Naive thymus-derived CD4-positive, alpha-beta T cell (primary cell): ENCODE measurements at regions of chr19 and their contacts with region 1.

Region 1: DNA sequence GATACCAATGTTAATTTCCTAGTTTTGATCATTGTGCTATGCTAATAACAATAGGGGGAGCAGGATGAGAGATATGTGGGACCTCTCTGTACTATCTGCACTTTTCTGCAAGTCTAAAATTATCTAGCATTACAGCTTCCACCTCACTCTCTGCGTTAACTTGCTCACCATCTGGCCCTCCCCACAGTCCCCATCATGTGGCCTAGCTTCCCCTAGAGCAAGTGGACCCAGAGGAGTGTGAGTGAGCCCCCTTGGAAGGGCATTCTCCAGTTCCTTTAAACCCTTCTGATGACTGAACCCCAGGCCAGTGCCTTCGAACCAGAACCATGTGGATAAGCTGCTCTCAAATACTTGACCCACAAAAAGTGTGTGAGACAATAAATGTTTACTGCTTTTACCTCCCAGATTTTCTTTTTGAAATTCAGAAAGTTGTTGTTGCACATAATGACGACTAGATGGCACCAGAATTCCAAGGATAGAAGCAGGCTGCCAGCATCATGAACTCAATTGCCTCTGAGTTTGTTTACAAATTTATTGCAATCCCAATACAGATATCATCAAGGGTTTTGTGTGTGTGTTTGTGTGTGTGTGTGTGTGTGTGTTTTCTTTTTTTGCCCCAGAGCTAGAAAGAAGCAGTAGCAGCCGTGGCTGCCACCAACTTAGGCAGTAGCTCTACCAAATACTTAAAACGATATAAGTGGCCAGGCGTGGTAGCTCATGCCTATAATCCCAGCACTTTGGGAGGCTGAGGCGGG is 49.0 kb upstream of the ZNF780A start:
- DNase-seq: peak in 6 of 9 donors; percentile 38 to 63 (median 55)
- ATAC-seq: peak; percentile 43
- H3K4me3 ChIP-seq: no peak overlapping the region
- H3K4me3 Mint-ChIP-seq: peak overlapping the region in 1 of 10 donors; percentile 16
- H3K27ac ChIP-seq: no peak overlapping the region
- H3K27ac Mint-ChIP-seq: peak overlapping the region in 5 of 9 donors; percentile 0 to 59 (median 31)
- H3K4me1 ChIP-seq: peaks cover 16 to 18% of the 10 kb centered on the region in 2 donors
- H3K4me1 Mint-ChIP-seq: peaks cover 0 to 29% (median 18%) of the 10 kb centered on the region in 7 donors
- H3K27me3 ChIP-seq: no peaks in the 10 kb centered on the region
- H3K27me3 Mint-ChIP-seq: peaks cover 0 to 21% (median 11%) of the 10 kb centered on the region in 5 donors

Region 2: DNA sequence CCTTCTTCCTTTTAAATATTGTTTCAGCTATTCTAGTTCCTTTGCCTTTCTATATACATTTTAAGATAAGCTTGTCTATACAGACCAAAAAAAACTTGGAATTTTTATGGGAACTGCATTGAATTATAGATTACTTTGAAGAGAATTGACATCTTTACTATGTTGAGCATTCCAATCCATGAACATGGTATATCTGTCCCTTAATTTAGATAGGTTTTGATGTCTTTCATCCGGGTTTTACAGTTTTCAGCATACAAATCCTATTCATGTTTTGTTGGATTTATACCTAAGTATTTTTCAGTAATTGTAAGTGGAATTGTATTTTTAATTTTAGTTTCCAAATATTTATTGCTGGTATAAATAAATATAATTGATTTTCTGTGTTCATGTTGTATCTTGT is 855.7 kb before region 1 on chr19:
- CTCF ChIA-PET with region 1: no interaction called
- POLR2A ChIA-PET with region 1: no interaction called
- intact Hi-C with region 1: no loop called
- DNase-seq: no peak
- ATAC-seq: no peak
- H3K4me3 ChIP-seq: no peak overlapping the region
- H3K4me3 Mint-ChIP-seq: no peak overlapping the region
- H3K27ac ChIP-seq: no peak overlapping the region
- H3K27ac Mint-ChIP-seq: no peak overlapping the region
- H3K4me1 ChIP-seq: no peaks in the 10 kb centered on the region
- H3K4me1 Mint-ChIP-seq: peaks cover 0 to 2% (median 0%) of the 10 kb centered on the region in 7 donors
- H3K27me3 ChIP-seq: no peaks in the 10 kb centered on the region
- H3K27me3 Mint-ChIP-seq: peaks cover 0 to 35% (median 5%) of the 10 kb centered on the region in 5 donors

Region 3: GRCh38 chr19:39792999-39793546 is 346.6 kb before region 1 on chr19:
- CTCF ChIA-PET with region 1: no interaction called
- POLR2A ChIA-PET with region 1: no interaction called
- intact Hi-C with region 1: loop called in 1 of 2 experiments (anchors 5 kb)
- DNase-seq: peak; percentile 56 to 80 (median 72)
- ATAC-seq: peak; percentile 94
- H3K4me3 ChIP-seq: peak overlapping the region; percentile 74
- H3K4me3 Mint-ChIP-seq: peak overlapping the region; percentile 58 to 84 (median 80)
- H3K27ac ChIP-seq: no peak overlapping the region
- H3K27ac Mint-ChIP-seq: no peak overlapping the region
- H3K4me1 ChIP-seq: no peaks in the 10 kb centered on the region
- H3K4me1 Mint-ChIP-seq: peaks cover 0 to 7% (median 0%) of the 10 kb centered on the region in 7 donors
- H3K27me3 ChIP-seq: no peaks in the 10 kb centered on the region
- H3K27me3 Mint-ChIP-seq: peaks cover 0 to 18% (median 2%) of the 10 kb centered on the region in 5 donors

Region 4: DNA sequence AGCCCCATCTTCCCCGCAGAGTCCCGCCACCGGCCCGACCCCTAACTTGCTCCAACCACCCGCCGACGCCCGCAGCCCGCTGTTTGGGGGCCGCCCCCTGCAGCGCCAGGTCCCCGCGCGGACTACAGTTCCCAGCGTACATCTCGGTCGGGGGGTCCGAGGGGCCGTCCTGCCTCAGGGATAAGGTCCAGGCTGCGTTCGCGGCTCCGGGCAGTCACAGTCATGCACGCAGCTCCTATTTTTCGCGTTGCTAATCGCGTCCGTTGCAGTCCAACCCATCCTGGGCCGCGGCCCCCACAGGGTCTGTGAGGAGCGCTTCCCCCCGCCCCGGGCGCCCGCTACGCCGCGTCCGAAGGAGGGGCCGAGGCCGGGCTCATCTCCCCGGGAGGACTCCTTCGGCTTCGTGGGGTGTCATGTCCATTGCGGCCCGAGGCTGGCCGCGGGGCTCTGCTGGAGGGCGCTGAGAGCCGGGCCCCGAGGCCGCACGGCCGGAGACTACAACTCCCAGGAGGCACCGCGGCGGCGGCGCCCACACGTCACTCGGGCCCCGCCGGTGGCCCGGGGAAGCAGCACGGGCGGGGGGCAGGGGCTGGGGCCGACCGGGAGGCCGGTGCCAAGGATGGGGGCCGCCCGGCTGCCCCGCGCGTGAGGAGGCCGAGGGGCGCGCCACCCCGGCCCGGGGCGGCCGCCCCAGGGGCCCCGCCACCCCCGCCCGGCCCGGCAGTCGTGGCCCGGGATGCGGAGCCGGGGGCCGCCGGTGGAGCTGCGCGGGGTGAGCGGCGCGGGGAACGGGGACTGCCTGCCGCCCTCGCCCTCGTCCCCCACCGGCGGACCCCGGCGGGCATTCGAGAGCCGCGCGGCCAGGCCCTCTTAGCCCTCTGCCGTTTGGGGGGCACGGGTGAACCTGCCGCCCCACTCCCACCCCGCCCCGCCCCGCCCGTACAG is 51.5 kb after region 1 on chr19 and contains the start of gene MAP3K10:
- CTCF ChIA-PET with region 1: no interaction called
- POLR2A ChIA-PET with region 1: no interaction called
- intact Hi-C with region 1: loop called in 1 of 2 experiments (anchors 2 kb)
- DNase-seq: peak; percentile 50 to 84 (median 67)
- ATAC-seq: peak; percentile 95
- H3K4me3 ChIP-seq: peak within 1 kb of the TSS; percentile 97
- H3K4me3 Mint-ChIP-seq: peak within 1 kb of the TSS; percentile 76 to 92 (median 86)
- H3K27ac ChIP-seq: peak within 1 kb of the TSS; percentile 86
- H3K27ac Mint-ChIP-seq: peak within 1 kb of the TSS; percentile 53 to 94 (median 87)
- H3K4me1 ChIP-seq: peaks cover 5 to 10% of the 10 kb centered on the region in 2 donors
- H3K4me1 Mint-ChIP-seq: peaks cover 14 to 39% (median 30%) of the 10 kb centered on the region in 7 donors
- H3K27me3 ChIP-seq: no peaks in the 10 kb centered on the region
- H3K27me3 Mint-ChIP-seq: no peaks in the 10 kb centered on the region
- total RNA-seq, gene MAP3K10: 22.3 to 31.5 (median 27.0) TPM

Region 5: DNA sequence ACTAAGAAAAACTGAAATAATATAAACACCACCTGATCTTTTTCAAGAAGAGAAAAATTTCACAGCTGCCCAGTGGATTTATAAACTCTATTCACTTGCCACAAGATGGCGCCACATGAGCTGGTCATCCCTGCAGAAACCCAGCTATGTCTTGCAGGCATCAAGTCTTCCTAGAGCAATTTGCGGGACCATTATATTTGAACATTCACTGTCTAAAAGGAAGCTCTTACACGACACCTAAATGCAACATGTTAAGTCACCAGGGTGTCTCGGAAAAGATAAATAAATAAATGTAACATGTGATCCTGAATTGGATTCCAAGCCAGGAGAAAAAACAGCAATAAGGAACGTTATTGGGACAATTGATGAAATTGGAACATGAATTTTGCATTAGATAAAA is 165.7 kb after region 1 on chr19:
- CTCF ChIA-PET with region 1: no interaction called
- POLR2A ChIA-PET with region 1: no interaction called
- intact Hi-C with region 1: loop called in 1 of 2 experiments (anchors 1 kb)
- DNase-seq: peak; percentile 39 to 75 (median 63)
- ATAC-seq: peak; percentile 80
- H3K4me3 ChIP-seq: no peak overlapping the region
- H3K4me3 Mint-ChIP-seq: no peak overlapping the region
- H3K27ac ChIP-seq: no peak overlapping the region
- H3K27ac Mint-ChIP-seq: no peak overlapping the region
- H3K4me1 ChIP-seq: no peaks in the 10 kb centered on the region
- H3K4me1 Mint-ChIP-seq: peaks cover 0 to 5% (median 4%) of the 10 kb centered on the region in 7 donors
- H3K27me3 ChIP-seq: no peaks in the 10 kb centered on the region
- H3K27me3 Mint-ChIP-seq: no peaks in the 10 kb centered on the region

Region 6: DNA sequence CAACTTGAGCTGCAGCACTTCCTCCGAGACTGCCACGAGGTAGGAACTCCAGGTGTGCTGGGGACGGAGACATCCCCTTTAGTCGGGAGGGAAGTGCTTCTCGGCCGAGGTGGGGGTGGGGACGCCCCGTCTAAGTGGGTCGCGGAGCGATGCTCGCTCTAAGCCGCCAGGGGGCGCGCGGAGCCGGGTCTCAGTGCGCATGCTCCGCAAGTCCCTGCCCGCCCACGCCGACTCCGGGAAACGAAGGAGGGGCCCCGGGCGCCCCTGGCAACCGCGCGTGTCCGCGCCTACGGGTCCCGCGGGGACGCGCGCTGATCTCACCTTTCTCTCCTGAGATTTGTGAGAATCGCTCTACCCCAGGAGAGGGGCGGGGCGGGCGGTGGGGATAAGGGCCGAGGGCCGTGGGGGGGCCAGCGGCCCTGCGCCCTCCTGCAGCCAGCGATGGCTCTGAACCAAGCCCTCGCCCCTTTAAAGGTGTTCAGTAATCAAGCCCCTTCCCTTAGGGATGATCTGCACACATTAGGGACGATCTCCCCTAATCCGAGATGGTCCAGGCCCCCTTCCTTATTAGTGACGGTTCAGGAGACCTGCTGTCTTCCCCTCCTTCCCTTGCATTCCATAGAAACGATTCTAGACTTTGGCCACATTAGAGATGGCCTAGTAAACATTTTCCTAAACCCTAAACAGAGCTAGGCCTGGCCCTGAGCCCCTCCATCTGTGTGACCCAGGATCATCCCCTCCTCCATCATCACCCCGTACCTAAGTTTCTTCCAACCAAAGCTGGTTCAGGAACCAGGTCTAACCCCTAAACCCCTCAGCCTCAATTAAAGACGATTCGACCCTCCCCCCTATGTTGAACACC is 389.6 kb after region 1 on chr19:
- CTCF ChIA-PET with region 1: no interaction called
- POLR2A ChIA-PET with region 1: no interaction called
- intact Hi-C with region 1: loop called in 1 of 2 experiments (anchors 5 kb)
- DNase-seq: peak; percentile 84 to 97 (median 89)
- ATAC-seq: peak; percentile 97
- H3K4me3 ChIP-seq: peak overlapping the region; percentile 72
- H3K4me3 Mint-ChIP-seq: peak overlapping the region; percentile 66 to 87 (median 81)
- H3K27ac ChIP-seq: no peak overlapping the region
- H3K27ac Mint-ChIP-seq: peak overlapping the region in 6 of 9 donors; percentile 36 to 90 (median 60)
- H3K4me1 ChIP-seq: peaks cover 9 to 16% of the 10 kb centered on the region in 2 donors
- H3K4me1 Mint-ChIP-seq: peaks cover 5 to 25% (median 12%) of the 10 kb centered on the region in 7 donors
- H3K27me3 ChIP-seq: peaks cover 0 to 3% of the 10 kb centered on the region in 2 donors
- H3K27me3 Mint-ChIP-seq: peaks cover 13 to 37% (median 24%) of the 10 kb centered on the region in 5 donors